ENCODE measurements at regions of chr6 and their contacts with region 1.

Region 1: GRCh38 chr6:49423817-49424216 is 39.2 kb downstream of the MMUT start:
- DNase-seq: peak; percentile 16
- H3K4me3 ChIP-seq: no peak overlapping the region
- H3K27ac ChIP-seq: no peak overlapping the region
- H3K4me1 ChIP-seq: no peaks in the 10 kb centered on the region
- H3K27me3 ChIP-seq: no peaks in the 10 kb centered on the region
- CTCF ChIP-seq: peak; percentile 48
- EP300 ChIP-seq: no peak
- RAD21 ChIP-seq: peak; percentile 72

Region 2: DNA sequence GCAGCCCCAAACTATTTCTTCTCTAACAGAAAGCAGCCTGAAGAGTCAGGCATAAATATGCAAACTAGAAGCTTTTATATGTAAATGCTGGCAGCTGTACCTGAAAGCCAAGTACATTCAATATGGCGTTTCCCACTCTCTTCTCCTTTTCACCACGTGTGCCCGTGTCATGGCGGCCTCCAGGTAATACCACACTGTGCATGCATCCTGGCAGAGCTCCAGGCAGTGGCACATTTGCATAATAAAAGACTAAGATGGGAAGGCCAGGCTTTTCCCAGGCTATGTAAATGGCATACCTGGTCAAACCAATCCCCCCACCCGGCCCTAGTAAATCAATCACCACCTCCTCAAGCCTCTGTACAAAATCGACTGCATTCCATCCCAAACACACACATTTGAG is 81.4 kb before region 1 on chr6:
- CTCF ChIA-PET with region 1: no interaction called
- POLR2A ChIA-PET with region 1: no interaction called
- DNase-seq: no peak
- H3K4me3 ChIP-seq: no peak overlapping the region
- H3K27ac ChIP-seq: no peak overlapping the region
- H3K4me1 ChIP-seq: no peaks in the 10 kb centered on the region
- H3K27me3 ChIP-seq: no peaks in the 10 kb centered on the region
- CTCF ChIP-seq: no peak
- EP300 ChIP-seq: no peak
- RAD21 ChIP-seq: no peak

Region 3: DNA sequence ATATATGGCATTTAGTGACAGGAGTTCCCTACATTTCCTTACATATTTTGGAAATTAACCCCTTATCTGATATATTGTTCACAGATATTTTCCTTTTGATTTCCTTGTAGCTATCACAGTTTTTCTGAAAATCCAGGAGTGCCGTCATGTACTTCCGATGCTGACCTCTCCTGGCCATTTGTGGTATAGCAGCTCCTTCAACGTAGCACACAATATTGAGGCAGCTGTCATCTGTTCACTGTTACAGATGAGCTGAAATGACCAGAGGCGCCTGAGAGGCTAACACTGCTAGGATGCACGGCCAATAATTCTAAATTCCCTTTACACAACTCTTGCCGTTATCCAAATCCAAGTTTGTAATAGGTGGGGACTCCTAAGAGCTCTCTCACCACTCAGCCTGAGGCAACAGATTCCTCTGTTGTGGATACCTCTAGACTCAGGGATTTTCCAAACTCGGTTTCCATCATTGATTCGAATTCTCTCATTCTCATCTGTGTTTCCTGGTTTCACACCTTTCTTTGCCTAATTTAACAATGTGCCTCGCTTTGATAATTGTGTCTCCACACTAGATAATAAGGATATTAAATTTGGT is 13.8 kb before region 1 on chr6:
- CTCF ChIA-PET with region 1: interaction called, 16 read pairs
- POLR2A ChIA-PET with region 1: no interaction called
- DNase-seq: peak; percentile 40
- H3K4me3 ChIP-seq: no peak overlapping the region; a peak in 1 of 4 replicates
- H3K27ac ChIP-seq: no peak overlapping the region
- H3K4me1 ChIP-seq: no peaks in the 10 kb centered on the region; a peak in 1 of 4 replicates
- H3K27me3 ChIP-seq: no peaks in the 10 kb centered on the region
- CTCF ChIP-seq: peak; percentile 91
- EP300 ChIP-seq: no peak
- RAD21 ChIP-seq: peak; percentile 89

Region 4: DNA sequence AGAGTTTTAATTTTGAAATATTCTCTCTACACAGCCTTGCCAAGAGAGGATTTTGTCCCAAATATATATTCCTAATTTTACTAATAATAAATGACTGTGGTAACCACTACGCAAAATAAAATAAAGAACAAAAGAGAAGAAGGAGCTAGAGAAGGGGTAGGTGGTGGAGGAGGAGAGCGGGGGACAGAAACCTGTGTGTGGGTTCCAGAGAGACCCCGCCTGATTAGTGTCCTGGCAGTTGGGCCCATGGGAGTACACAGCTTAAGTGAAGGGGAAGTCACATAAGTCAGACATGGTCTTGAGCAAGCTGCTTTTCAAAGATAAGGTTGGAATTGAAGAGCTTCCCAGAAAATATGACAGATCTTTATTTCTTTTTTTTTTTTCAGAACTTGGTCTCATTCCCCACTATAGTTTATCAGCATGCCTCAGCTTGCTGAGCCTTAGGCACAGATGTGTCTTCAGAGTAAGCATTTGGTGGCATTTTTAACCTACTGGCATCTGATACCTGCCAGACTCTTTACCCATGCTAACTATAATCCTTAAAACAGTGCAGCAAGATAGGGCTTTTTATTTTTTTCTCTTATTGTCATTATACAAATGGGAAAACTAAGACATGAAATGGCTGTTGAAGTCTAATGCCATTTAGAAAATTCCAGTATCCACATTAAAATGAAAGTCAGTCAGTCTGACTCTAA is 222.5 kb after region 1 on chr6:
- CTCF ChIA-PET with region 1: no interaction called
- POLR2A ChIA-PET with region 1: no interaction called
- DNase-seq: no peak
- H3K4me3 ChIP-seq: no peak overlapping the region
- H3K27ac ChIP-seq: no peak overlapping the region
- H3K4me1 ChIP-seq: no peaks in the 10 kb centered on the region
- H3K27me3 ChIP-seq: no peaks in the 10 kb centered on the region; the same call in 1 of the 2 replicates
- CTCF ChIP-seq: no peak
- EP300 ChIP-seq: no peak
- RAD21 ChIP-seq: no peak